H1 (cell line): ENCODE measurements at regions of chr3 and their contacts with region 1.

Region 1: DNA sequence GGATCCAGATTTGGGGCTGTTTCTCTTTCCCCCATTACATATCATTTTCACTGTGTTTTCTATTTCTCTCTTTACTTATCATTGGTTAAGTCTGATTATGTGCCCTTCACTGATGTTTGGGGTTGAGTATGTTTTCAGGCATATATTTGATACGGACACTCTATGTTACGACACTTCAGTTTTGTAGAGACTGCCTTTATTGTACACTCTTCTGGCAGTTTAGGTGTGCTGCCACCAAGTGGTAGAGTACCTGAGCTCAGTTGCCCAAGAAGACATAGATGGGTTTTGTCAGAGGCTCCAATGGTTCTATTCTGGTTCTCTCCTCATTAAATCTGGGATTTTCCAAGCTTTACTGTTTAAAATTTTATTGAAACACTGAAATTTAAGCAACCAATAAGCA is 255.0 kb upstream of the ROPN1 start:
- DNase-seq: no peak
- H3K4me3 ChIP-seq: no peak overlapping the region
- H3K27ac ChIP-seq: no peak overlapping the region
- H3K4me1 ChIP-seq: peaks cover 0 to 3% (median 0%) of the 10 kb centered on the region in 4 experiments; a peak in 1 of 7 replicates
- H3K27me3 ChIP-seq: no peaks in the 10 kb centered on the region
- CTCF ChIP-seq: peak in 1 of 3 experiments; percentile 63; a peak in 1 of 4 replicates
- EP300 ChIP-seq: no peak
- POLR2A ChIP-seq: no peak
- RAD21 ChIP-seq: peak; percentile 63 to 67

Region 2: DNA sequence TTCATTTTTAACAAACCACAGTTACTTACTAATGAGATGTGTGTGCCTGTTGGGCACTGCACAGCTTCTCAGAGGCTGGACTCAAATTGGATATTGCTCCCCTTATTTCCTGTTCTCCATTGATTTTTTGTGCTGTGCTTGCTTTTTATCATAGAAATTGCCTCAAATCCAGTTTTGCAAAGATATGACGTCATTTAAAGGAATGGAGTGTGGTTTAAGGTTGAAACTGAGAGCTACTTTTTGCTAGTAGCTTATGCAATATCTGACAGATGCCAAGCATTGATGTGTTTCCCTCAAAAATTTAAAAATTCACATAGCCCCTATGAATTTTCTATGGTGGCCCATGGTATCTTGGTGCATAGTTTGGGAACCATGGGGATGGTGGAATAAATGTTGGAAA is 187.4 kb before region 1 on chr3:
- CTCF ChIA-PET with region 1: no interaction called
- POLR2A ChIA-PET with region 1: no interaction called
- DNase-seq: no peak
- H3K4me3 ChIP-seq: no peak overlapping the region
- H3K27ac ChIP-seq: no peak overlapping the region
- H3K4me1 ChIP-seq: no peaks in the 10 kb centered on the region; a peak in 2 of 7 replicates
- H3K27me3 ChIP-seq: peaks cover 0 to 5% (median 3%) of the 10 kb centered on the region in 4 experiments; a peak in 3 of 7 replicates
- CTCF ChIP-seq: no peak
- EP300 ChIP-seq: no peak
- POLR2A ChIP-seq: no peak
- RAD21 ChIP-seq: no peak

Region 3: DNA sequence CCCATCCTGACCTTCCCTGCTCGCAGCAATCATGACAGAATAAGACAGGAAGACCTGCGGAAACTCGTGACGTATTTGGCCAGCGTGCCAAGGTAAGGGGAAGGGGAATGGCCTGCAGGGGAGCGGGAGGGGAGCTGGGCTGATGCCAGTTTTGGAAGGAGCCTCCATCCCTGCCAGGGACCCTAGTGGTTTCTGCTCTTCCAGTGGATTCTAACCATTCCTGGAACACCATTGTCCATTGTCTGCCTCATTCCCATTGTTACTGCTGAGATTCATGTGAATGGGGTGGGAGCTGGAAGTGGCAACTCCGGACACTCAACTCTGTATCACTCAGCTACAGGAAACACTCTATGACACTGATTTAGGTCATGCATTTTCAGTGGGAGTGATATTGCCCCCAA is 12.1 kb before region 1 on chr3:
- CTCF ChIA-PET with region 1: interaction called, 13 read pairs
- POLR2A ChIA-PET with region 1: no interaction called
- DNase-seq: no peak
- H3K4me3 ChIP-seq: no peak overlapping the region
- H3K27ac ChIP-seq: no peak overlapping the region
- H3K4me1 ChIP-seq: peaks cover 2 to 6% (median 4%) of the 10 kb centered on the region in 4 experiments; a peak in 5 of 7 replicates
- H3K27me3 ChIP-seq: no peaks in the 10 kb centered on the region; a peak in 1 of 7 replicates
- CTCF ChIP-seq: no peak
- EP300 ChIP-seq: no peak
- POLR2A ChIP-seq: no peak
- RAD21 ChIP-seq: no peak

Region 4: GRCh38 chr3:124258057-124258501 is 11.1 kb after region 1 on chr3:
- CTCF ChIA-PET with region 1: interaction called, 11 read pairs
- POLR2A ChIA-PET with region 1: no interaction called
- DNase-seq: no peak
- H3K4me3 ChIP-seq: no peak overlapping the region
- H3K27ac ChIP-seq: no peak overlapping the region
- H3K4me1 ChIP-seq: peaks cover 0 to 8% (median 4%) of the 10 kb centered on the region in 4 experiments
- H3K27me3 ChIP-seq: no peaks in the 10 kb centered on the region
- CTCF ChIP-seq: no peak
- EP300 ChIP-seq: no peak
- POLR2A ChIP-seq: no peak
- RAD21 ChIP-seq: no peak

Region 5: DNA sequence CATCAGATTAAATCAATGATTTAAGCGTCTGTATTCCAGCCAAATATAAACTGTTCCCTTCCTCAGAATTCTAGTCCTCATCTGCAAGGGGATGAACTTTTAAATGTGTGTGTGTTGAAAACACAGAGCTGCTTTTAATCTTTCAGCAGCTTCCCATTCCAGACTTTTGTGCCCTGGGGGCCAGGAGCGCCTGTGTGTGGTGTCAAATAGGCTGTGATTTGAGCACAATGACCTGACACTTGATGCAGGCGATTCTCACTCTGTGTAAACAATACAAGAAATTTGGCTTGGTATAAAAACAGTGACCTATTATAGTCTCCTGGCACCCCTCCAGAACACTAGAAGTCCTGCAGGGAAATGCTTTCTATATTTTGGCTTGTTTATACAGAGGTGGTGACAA is 19.5 kb after region 1 on chr3:
- CTCF ChIA-PET with region 1: interaction called, 14 read pairs
- POLR2A ChIA-PET with region 1: no interaction called
- DNase-seq: no peak
- H3K4me3 ChIP-seq: no peak overlapping the region
- H3K27ac ChIP-seq: no peak overlapping the region
- H3K4me1 ChIP-seq: no peaks in the 10 kb centered on the region; a peak in 1 of 7 replicates
- H3K27me3 ChIP-seq: no peaks in the 10 kb centered on the region
- CTCF ChIP-seq: no peak
- EP300 ChIP-seq: no peak
- POLR2A ChIP-seq: no peak
- RAD21 ChIP-seq: no peak

Region 6: GRCh38 chr3:124281453-124282316 is 34.7 kb after region 1 on chr3:
- CTCF ChIA-PET with region 1: interaction called, 12 read pairs
- POLR2A ChIA-PET with region 1: no interaction called
- DNase-seq: no peak
- H3K4me3 ChIP-seq: no peak overlapping the region
- H3K27ac ChIP-seq: no peak overlapping the region
- H3K4me1 ChIP-seq: 0 out of 7 replicates have a peak, but pooled peaks cover 0 to 3% (median 0%) of the 10 kb centered on the region in 4 experiments
- H3K27me3 ChIP-seq: no peaks in the 10 kb centered on the region; a peak in 1 of 7 replicates
- CTCF ChIP-seq: peak in 2 of 3 experiments; percentile 73 to 85; a peak in 3 of 4 replicates
- EP300 ChIP-seq: no peak
- POLR2A ChIP-seq: no peak
- RAD21 ChIP-seq: peak; percentile 88 to 92

Region 7: GRCh38 chr3:124298726-124299350 is 51.9 kb after region 1 on chr3:
- CTCF ChIA-PET with region 1: no interaction called
- POLR2A ChIA-PET with region 1: no interaction called
- DNase-seq: no peak
- H3K4me3 ChIP-seq: no peak overlapping the region
- H3K27ac ChIP-seq: no peak overlapping the region
- H3K4me1 ChIP-seq: no peaks in the 10 kb centered on the region; a peak in 1 of 7 replicates
- H3K27me3 ChIP-seq: no peaks in the 10 kb centered on the region
- CTCF ChIP-seq: no peak
- EP300 ChIP-seq: no peak
- POLR2A ChIP-seq: no peak
- RAD21 ChIP-seq: no peak